Right ventricle myocardium superior (tissue), 1 donor: ENCODE measurements at regions of chr9 and their contacts with region 1.

Region 1: DNA sequence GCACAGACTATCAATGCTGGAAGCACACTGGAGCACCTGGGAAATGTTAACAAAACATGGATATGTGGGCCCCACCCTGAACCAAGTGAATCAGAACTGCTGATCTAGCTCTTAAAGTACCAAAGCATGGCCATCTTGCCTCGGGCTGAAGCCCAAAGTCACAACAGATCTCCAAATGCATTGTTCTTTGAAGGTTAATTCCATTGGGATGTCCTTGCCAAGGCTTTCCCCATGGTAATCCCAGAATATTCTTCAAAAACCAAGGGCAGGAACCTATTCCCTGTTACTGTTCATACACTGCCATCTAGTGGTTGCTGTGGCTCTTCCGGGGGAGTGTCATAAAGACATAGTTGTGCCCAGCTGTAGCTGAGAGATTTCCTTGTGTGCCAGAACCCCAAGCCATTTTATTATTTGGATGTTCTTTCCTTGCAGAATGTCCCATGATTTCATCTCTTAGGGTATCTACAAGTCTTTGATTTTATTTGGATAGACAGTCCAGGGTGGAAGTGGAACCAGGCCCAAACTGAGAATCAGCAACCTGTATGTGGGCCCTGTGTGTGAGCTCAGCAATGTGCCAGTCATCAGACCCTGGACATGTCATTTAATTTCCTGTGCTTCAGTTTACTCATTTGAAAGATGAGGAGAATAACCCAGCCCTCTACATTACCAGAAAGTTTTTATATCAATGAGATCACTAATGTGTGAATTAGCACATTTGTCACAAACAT is 290.0 kb downstream of the ACTL7B start:
- DNase-seq: peak; percentile 40
- ATAC-seq: peak; percentile 97

Region 2: GRCh38 chr9:107465467-107466451 is 1100.1 kb before region 1 on chr9:
- intact Hi-C with region 1: loop called (anchors 5 kb)
- DNase-seq: peak; percentile 87
- ATAC-seq: peak; percentile 100

Region 3: DNA sequence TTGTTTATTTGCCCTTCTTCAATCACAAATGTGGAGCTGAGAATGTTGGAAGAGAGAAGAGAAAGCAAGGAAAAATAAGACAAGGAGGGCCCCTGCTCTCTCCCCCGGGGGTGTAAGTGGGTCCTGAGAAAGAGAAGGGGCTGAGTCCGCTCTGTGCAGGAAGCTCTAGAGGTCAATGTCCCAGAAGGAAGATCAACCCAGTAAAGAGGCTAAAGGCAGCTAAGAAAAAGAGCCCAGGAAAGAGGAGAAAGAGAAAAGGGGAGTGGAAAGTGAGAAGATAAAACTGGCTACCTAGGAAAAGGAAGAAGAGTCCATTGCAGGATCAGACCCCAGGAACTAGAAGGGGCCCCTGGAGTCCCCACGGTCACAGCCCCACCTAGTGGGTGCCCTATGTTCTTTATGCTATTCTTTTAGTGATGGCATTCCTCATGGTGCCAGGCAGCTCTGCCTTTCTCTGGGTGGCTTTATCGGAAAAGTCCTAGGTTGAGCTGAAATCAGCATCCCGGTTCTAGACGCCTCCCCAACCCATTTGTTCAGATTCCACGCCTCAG is 293.4 kb before region 1 on chr9:
- intact Hi-C with region 1: loop called (anchors 10 kb)
- DNase-seq: peak; percentile 63
- ATAC-seq: peak; percentile 91